ENCODE measurements at regions of chr15 and their contacts with region 1.

Region 1: GRCh38 chr15:91224755-91225380 is 124.8 kb downstream of the SV2B start:
- DNase-seq: no peak
- ATAC-seq: peak; percentile 77
- H3K4me3 ChIP-seq: no peak overlapping the region
- H3K27ac ChIP-seq: no peak overlapping the region
- H3K4me1 ChIP-seq: no peaks in the 10 kb centered on the region
- H3K27me3 ChIP-seq: peaks cover 27% of the 10 kb centered on the region
- CTCF ChIP-seq: peak; percentile 74

Region 2: GRCh38 chr15:90986807-90987507 is 237.9 kb before region 1 on chr15:
- intact Hi-C with region 1: no loop called
- DNase-seq: no peak
- ATAC-seq: no peak
- H3K4me3 ChIP-seq: no peak overlapping the region
- H3K27ac ChIP-seq: no peak overlapping the region
- H3K4me1 ChIP-seq: no peaks in the 10 kb centered on the region
- H3K27me3 ChIP-seq: no peaks in the 10 kb centered on the region
- CTCF ChIP-seq: no peak

Region 3: GRCh38 chr15:91068966-91069365 is 155.9 kb before region 1 on chr15:
- intact Hi-C with region 1: loop called (anchors 10 kb)
- DNase-seq: no peak
- ATAC-seq: no peak
- H3K4me3 ChIP-seq: no peak overlapping the region
- H3K27ac ChIP-seq: no peak overlapping the region
- H3K4me1 ChIP-seq: no peaks in the 10 kb centered on the region
- H3K27me3 ChIP-seq: peaks cover 34% of the 10 kb centered on the region
- CTCF ChIP-seq: no peak